ENCODE measurements at regions of chr12 and their contacts with region 1.

Region 1: GRCh38 chr12:90854136-90854689 is 100.8 kb downstream of the CCER1 start:
- DNase-seq: no peak
- H3K4me3 Mint-ChIP-seq: no peak overlapping the region
- H3K27ac Mint-ChIP-seq: no peak overlapping the region
- H3K4me1 Mint-ChIP-seq: no peaks in the 10 kb centered on the region
- H3K27me3 Mint-ChIP-seq: peaks cover 1% of the 10 kb centered on the region

Region 2: DNA sequence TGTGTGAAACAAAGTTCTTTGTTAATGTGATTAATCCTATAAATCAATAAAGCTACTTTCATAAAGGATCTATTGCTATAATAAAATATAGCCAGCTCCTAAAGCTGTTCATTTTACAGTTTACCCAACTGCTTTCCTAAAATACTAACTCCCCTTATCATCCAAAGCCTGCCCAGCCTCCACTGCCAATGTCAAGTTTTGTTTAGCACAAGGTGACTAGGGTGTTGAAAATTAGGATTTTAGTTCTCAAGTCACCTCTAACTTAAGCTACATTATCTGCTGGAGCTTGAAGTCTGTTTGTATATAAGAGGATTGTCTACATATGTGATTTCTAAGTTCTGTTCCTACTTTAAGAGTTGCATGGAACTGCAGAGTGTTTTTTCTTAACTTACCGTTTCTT is 14.4 kb after region 1 on chr12:
- CTCF ChIA-PET with region 1: interaction called, 10 read pairs
- POLR2A ChIA-PET with region 1: no interaction called
- intact Hi-C with region 1: no loop called
- DNase-seq: no peak
- H3K4me3 Mint-ChIP-seq: no peak overlapping the region
- H3K27ac Mint-ChIP-seq: no peak overlapping the region
- H3K4me1 Mint-ChIP-seq: no peaks in the 10 kb centered on the region
- H3K27me3 Mint-ChIP-seq: no peaks in the 10 kb centered on the region

Measured in activated CD4-positive, alpha-beta memory T cell treated with anti-CD3 and anti-CD28 coated beads for 36 hours (primary cell).